Heart left ventricle (tissue), 16 donors: ENCODE measurements at regions of chr1 and their contacts with region 1.

Region 1: GRCh38 chr1:45011837-45012638 is at the start of gene UROD:
- DNase-seq: peak; percentile 91 to 96 (median 92)
- ATAC-seq: peak; percentile 91 to 97 (median 95)
- H3K4me3 ChIP-seq: peak within 1 kb of the TSS; percentile 78 to 100 (median 93)
- H3K27ac ChIP-seq: peak within 1 kb of the TSS; percentile 66 to 90 (median 84)
- H3K4me1 ChIP-seq: peaks cover 2 to 53% (median 34%) of the 10 kb centered on the region in 12 donors
- H3K27me3 ChIP-seq: no peaks in the 10 kb centered on the region
- CTCF ChIP-seq: peak in 1 of 12 donors; percentile 3
- POLR2A ChIP-seq: peak in 1 of 2 donors; percentile 50
- total RNA-seq, gene UROD: 58.2 to 95.8 (median 78.4) TPM

Region 2: DNA sequence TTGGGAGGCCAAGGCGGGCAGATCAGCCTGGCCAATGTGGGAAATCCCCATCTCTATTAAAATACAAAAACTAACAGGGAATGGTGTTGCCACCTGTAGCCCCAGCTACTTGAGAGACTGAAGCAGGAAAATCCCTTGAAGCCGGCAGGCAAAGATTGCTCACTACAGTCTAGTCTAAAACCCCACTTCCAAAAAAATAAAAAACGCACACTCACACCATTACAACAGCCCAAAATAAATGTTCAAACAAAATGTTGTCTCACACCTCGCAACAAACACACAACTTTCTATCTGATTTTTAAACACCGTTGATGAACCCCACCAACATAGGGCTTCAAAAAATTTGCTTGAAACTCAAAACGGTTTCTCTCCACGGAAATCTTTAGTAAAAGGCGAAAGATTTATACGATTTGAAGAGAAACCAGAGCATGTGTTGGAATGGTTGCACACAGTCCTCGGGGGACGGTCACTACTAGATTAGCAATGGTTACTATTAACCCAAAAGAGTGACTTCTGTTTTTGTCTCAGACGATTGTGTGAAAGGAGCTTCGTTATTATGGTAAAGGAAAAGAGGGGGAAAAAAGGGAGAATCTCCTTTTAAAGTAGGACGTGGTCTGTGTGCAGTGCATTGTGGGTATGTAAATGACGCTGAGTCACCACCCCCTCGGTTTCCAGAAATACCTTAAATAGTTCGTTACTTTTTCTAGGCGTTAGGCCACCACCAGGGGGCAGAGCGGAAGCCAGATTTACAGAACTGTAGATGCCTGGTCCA is 281.1 kb before region 1 on chr1 and contains the start of gene RNU5D-1:
- intact Hi-C with region 1: loop called in 3 of 10 experiments (anchors 5 to 10 kb)
- DNase-seq: peak; percentile 90 to 94 (median 93)
- ATAC-seq: peak; percentile 84 to 91 (median 87)
- H3K4me3 ChIP-seq: peak within 1 kb of the TSS in 9 of 12 donors; percentile 17 to 48 (median 32)
- H3K27ac ChIP-seq: peak within 1 kb of the TSS; percentile 70 to 96 (median 84)
- H3K4me1 ChIP-seq: peaks cover 0 to 30% (median 9%) of the 10 kb centered on the region in 12 donors
- H3K27me3 ChIP-seq: no peaks in the 10 kb centered on the region
- CTCF ChIP-seq: peak; percentile 74 to 91 (median 82)
- POLR2A ChIP-seq: peak in 1 of 2 donors; percentile 58
- total RNA-seq, gene RNU5D-1: not detected

Region 3: DNA sequence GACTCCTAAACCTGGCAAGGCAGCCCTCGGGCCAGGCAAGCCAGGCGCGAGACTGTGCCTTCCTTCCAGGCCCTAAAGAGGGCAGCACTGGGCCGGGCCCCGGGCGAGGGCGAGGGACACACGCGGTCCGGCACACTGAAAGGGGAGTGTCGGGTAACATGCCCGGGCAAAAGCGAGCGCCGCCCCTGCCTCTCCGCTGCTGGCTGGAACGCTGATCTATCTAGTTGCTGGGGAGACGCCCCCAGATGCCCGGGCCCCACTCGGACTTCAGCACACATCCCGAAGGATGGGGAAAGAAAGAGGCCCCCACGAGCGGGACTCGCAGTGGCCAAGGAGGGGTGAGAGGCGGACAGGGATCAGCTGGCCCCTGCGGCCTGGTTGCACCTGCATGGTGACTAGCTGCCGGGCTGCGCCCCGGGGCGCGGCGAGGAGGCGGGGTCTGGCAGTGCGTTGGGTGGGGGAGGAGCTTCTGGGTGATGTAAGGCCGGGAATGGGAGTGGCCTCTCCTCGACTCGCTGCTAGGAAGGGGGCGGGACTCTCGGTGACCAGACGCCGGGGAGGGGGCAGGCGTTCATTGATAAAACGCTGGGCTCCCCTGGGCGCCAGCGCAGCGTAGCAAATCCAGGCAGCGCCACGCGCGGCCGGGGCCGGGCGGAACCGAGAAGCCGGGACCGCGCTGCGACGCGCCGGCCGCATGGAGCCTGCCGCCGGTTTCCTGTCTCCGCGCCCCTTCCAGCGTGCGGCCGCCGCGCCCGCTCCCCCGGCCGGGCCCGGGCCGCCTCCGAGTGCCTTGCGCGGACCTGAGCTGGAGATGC is 212.1 kb before region 1 on chr1 and contains the start of gene PLK3:
- intact Hi-C with region 1: loop called in 2 of 10 experiments (anchors 10 kb)
- DNase-seq: peak; percentile 98 to 99 (median 99)
- ATAC-seq: peak; percentile 96 to 98 (median 97)
- H3K4me3 ChIP-seq: peak within 1 kb of the TSS; percentile 67 to 97 (median 88)
- H3K27ac ChIP-seq: peak within 1 kb of the TSS; percentile 77 to 98 (median 94)
- H3K4me1 ChIP-seq: peaks cover 3 to 45% (median 31%) of the 10 kb centered on the region in 12 donors
- H3K27me3 ChIP-seq: no peaks in the 10 kb centered on the region
- CTCF ChIP-seq: peak; percentile 89 to 98 (median 94)
- POLR2A ChIP-seq: peak; percentile 70 to 99
- total RNA-seq, gene PLK3: 4.5 to 17.9 (median 6.6) TPM

Region 4: GRCh38 chr1:44835738-44836675 is 176.0 kb before region 1 on chr1:
- intact Hi-C with region 1: loop called in 7 of 10 experiments (anchors 2 to 10 kb)
- DNase-seq: peak; percentile 82 to 89 (median 86)
- ATAC-seq: peak; percentile 65 to 89 (median 87)
- H3K4me3 ChIP-seq: no peak overlapping the region
- H3K27ac ChIP-seq: no peak overlapping the region
- H3K4me1 ChIP-seq: peaks cover 0 to 14% (median 3%) of the 10 kb centered on the region in 12 donors
- H3K27me3 ChIP-seq: no peaks in the 10 kb centered on the region
- CTCF ChIP-seq: peak; percentile 78 to 93 (median 86)
- POLR2A ChIP-seq: no peak

Region 5: GRCh38 chr1:45205910-45206721 is 194.1 kb after region 1 on chr1 and contains the start of gene ZSWIM5:
- intact Hi-C with region 1: loop called in 2 of 10 experiments (anchors 10 kb)
- DNase-seq: peak; percentile 52 to 83 (median 63)
- ATAC-seq: peak; percentile 88 to 97 (median 92)
- H3K4me3 ChIP-seq: peak within 1 kb of the TSS; percentile 71 to 95 (median 84)
- H3K27ac ChIP-seq: peak within 1 kb of the TSS; percentile 16 to 90 (median 83)
- H3K4me1 ChIP-seq: peaks cover 0 to 28% (median 8%) of the 10 kb centered on the region in 12 donors
- H3K27me3 ChIP-seq: peaks cover 0 to 29% (median 0%) of the 10 kb centered on the region in 9 donors
- CTCF ChIP-seq: no peak
- POLR2A ChIP-seq: peak in 1 of 2 donors; percentile 22
- total RNA-seq, gene ZSWIM5: 0.39 to 1.7 (median 0.99) TPM

Region 6: GRCh38 chr1:45490626-45491486 is 478.8 kb after region 1 on chr1 and contains the start of gene TESK2:
- intact Hi-C with region 1: loop called in 9 of 10 experiments (anchors 1 to 10 kb)
- DNase-seq: peak; percentile 96 to 97 (median 97)
- ATAC-seq: peak; percentile 98 to 99 (median 99)
- H3K4me3 ChIP-seq: peak within 1 kb of the TSS; percentile 60 to 99 (median 79)
- H3K27ac ChIP-seq: peak within 1 kb of the TSS in 11 of 12 donors; percentile 34 to 87 (median 69)
- H3K4me1 ChIP-seq: peaks cover 0 to 22% (median 11%) of the 10 kb centered on the region in 12 donors
- H3K27me3 ChIP-seq: no peaks in the 10 kb centered on the region
- CTCF ChIP-seq: peak in 4 of 12 donors; percentile 8 to 20 (median 14)
- POLR2A ChIP-seq: peak in 1 of 2 donors; percentile 87
- total RNA-seq, gene TESK2: 0.74 to 4.7 (median 1.5) TPM